Endothelial cell of umbilical vein (primary cell): ENCODE measurements at regions of chr9 and their contacts with region 1.

Region 1: DNA sequence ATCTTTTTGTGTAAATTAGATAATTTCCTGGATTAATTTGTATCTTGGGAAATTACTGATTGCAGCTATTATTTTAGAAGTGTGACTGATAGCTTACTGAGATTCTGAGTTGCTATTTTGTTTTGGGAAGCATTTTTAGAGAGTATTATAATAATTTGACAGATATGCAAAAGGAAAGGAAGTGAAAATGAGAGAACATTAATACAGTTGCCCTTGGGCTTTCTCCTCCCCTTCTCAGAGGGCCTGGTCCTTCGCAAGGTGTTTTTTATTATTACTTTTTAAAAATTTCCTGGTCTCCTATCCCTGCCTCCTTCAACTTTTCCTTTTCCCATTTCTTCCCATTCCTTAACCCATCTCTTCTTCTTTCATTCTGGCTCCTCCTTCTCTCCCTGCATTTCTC is 32.6 kb downstream of the UBAP1 start:
- DNase-seq: no peak
- H3K4me3 ChIP-seq: no peak overlapping the region
- H3K27ac ChIP-seq: no peak overlapping the region
- H3K4me1 ChIP-seq: no peaks in the 10 kb centered on the region
- H3K27me3 ChIP-seq: no peaks in the 10 kb centered on the region
- CTCF ChIP-seq: no peak
- POLR2A ChIP-seq: no peak

Region 2: DNA sequence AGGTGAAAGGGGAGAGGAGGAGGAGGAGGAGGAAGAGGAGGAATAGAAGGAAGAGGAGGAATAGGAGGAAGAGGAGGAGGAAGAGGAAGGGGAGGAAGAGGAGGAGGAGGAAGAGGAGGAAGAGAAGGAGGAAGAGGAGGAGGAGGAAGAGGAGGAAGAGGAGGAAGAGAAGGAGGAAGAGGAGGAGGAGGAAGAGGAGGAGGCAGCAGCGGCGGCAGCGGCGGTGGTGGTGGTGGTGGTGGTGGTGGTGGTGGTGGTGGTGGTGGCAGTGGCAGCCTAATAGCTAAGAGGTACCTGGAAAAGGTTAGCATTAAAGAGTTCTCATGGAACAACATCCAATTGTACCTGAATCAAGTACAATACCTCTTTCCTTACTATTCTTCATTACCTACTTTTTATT is 195.2 kb before region 1 on chr9:
- CTCF ChIA-PET with region 1: no interaction called
- POLR2A ChIA-PET with region 1: no interaction called
- dilution Hi-C with region 1: no loop called
- intact Hi-C with region 1: no loop called
- DNase-seq: no peak
- H3K4me3 ChIP-seq: no peak overlapping the region
- H3K27ac ChIP-seq: no peak overlapping the region
- H3K4me1 ChIP-seq: no peaks in the 10 kb centered on the region
- H3K27me3 ChIP-seq: no peaks in the 10 kb centered on the region
- CTCF ChIP-seq: no peak
- POLR2A ChIP-seq: no peak

Region 3: GRCh38 chr9:34200092-34200491 is 11.3 kb before region 1 on chr9:
- CTCF ChIA-PET with region 1: interaction called, 10 read pairs
- POLR2A ChIA-PET with region 1: no interaction called
- dilution Hi-C with region 1: no loop called
- intact Hi-C with region 1: no loop called
- DNase-seq: no peak
- H3K4me3 ChIP-seq: no peak overlapping the region
- H3K27ac ChIP-seq: no peak overlapping the region
- H3K4me1 ChIP-seq: no peaks in the 10 kb centered on the region
- H3K27me3 ChIP-seq: no peaks in the 10 kb centered on the region
- CTCF ChIP-seq: no peak
- POLR2A ChIP-seq: no peak